ENCODE measurements at regions of chr9 and their contacts with region 1.

Region 1: DNA sequence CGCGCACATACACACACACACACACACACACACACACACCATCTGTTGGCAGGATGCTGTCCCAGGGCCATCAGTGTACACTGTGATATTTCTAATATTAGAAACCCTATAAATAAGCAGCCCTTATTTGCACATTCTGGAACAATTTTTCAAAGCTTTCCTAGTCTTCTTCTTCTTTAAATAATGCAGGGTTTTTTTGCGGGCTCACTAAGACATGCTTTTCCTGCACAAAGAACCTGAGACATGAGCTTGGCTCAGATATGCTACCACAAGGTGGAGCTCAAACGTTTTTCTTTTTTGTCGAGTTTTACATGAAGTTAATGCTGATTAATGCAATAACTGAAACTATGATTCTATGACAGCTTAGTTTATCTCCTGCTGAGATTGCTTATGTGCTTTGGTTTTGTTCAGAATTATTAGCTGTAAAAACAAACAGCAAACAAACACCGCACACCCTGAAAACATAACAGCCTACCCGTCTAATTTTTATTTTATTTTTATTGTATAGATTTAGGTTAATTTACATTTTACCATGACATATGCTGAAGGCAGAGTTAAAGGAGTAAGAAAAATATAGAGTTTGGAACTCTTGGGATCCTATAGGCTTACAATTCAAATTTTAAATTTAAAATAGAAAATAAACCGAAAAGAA is 95.8 kb downstream of the ALDH1A1 start:
- DNase-seq: peak in 1 of 4 donors; percentile 73
- ATAC-seq: peak; percentile 80
- H3K4me3 ChIP-seq: no peak overlapping the region
- H3K27ac ChIP-seq: no peak overlapping the region
- H3K4me1 ChIP-seq: no peaks in the 10 kb centered on the region
- H3K27me3 ChIP-seq: no peaks in the 10 kb centered on the region
- CTCF ChIP-seq: peak; percentile 38 to 53

Region 2: DNA sequence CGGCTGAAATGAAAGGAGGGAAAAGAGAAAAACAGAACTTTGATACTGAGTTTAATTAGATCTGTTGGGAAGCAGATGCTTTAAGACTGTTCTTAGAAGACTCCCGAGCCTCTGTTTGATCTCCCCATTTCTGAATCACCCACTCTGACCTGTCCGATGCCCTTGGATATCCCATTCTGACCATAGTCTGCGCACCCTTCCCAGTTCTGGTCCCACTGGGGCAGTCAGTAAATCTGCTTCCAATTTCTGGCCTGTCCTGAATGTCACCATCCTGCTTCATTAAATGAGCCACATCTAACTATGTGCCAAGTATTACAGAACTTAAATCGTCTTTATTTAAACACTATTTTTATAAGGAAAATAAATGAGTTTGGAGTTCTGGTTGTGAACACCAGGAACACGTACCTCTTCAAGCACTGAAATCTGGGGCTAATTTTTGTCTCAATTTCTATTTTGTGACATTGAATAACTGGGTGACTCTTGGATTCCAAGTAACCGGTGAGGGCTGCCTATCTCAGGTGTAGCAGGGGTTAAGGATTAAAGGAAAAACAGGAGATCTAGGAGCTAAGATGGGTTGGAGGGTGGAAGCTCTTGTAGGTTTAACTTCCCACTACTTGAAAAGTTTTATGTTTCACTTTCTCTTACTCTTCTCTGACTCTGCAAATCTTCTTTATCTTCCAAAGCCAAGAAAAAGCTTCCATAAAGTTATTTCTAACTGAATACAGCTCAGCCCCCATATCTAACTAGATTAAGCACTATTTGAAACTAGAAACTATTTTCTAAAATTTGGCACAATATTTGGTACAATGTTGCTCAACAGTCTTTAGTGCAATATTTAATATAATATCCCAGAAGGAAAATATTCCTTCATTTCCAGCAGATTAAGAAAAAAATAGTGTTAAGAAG is 55.6 kb after region 1 on chr9:
- intact Hi-C with region 1: no loop called
- DNase-seq: no peak
- ATAC-seq: no peak
- H3K4me3 ChIP-seq: no peak overlapping the region
- H3K27ac ChIP-seq: peak overlapping the region in 1 of 2 donors; percentile 6
- H3K4me1 ChIP-seq: no peaks in the 10 kb centered on the region
- H3K27me3 ChIP-seq: no peaks in the 10 kb centered on the region
- CTCF ChIP-seq: no peak

Region 3: DNA sequence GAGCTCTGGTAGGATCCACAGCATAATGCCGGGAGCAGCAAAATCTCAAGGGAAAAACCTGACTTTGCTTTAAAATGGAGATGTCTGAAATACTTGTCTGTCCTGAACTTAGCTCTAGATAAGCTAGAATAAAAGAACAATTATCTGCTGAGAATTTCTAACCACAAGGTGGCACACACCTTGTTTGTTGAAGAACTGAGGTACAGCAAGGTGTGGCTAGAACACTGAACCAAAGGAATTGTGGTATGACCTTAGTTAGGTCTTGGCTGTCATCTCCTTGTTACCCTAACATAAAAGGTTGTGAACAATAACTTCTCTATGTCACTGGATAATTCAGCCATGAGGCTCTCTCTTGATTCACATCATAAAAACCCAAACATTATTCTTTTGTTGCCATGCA is 222.2 kb after region 1 on chr9:
- intact Hi-C with region 1: loop called in 1 of 2 experiments (anchors 5 kb)
- DNase-seq: no peak
- ATAC-seq: peak; percentile 46
- H3K4me3 ChIP-seq: no peak overlapping the region
- H3K27ac ChIP-seq: no peak overlapping the region
- H3K4me1 ChIP-seq: no peaks in the 10 kb centered on the region
- H3K27me3 ChIP-seq: no peaks in the 10 kb centered on the region
- CTCF ChIP-seq: no peak

Measured in left lung (tissue), 14 donors.